A549 (cell line): ENCODE measurements at regions of chr12 and their contacts with region 1.

Region 1: GRCh38 chr12:121579981-121580868 is 598 bp downstream of the KDM2B start:
- DNase-seq: peak; percentile 58 to 67
- ATAC-seq: peak; percentile 78 to 80
- H3K4me3 ChIP-seq: peak overlapping the region; percentile 54
- H3K27ac ChIP-seq: peak overlapping the region; percentile 77 to 94
- H3K4me1 ChIP-seq: peaks cover 49% of the 10 kb centered on the region
- CTCF ChIP-seq: no peak
- EP300 ChIP-seq: no peak
- POLR2A ChIP-seq: peak; percentile 47
- RAD21 ChIP-seq: no peak

Region 2: DNA sequence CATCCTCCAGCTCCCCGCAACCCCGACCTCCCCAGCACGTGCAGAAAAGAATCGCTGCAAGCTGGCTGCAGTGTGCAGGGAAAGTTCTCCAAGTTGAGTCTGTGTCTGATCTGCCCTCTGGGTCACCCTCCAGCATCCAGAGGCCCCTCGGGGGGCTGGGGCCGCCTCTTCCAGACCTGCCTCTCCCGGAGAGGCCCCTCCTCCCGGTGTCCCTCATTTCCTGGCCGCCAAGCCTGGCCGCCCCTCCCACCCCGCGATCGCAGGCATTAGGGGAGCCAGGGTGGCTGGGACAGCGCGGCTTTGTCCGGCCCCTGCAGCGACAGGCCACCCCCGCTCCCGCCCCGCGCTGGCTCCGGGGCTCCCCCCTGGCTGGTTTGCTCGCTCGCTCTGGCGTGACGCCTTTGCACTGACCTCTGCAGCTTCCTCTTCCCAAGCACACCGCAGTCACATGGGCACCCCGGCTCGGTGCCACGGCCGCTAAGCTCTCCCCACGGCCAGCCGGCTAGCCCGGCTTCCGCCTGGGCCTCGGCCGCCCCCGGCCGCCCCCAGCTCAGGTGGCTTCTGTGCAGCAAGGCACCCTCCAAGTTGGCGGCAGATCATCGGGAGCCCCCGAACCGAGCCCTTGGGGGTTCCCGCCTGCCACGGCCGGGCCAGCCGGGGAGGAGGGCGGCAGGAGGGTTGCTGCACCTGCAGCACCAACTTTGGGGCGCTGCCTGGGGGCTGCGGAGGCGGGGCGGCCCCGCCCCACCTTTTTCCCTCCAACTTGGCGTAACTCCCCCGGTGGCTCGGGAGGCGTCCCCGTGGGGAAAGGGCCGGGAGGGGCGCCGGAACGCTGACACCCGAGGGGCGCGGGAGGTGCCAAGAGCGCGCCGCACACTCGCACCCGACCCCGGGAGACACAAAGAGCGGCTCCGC is 43.1 kb before region 1 on chr12:
- CTCF ChIA-PET with region 1: interaction called, 3 read pairs
- POLR2A ChIA-PET with region 1: interaction called, 10 read pairs
- DNase-seq: peak; percentile 76 to 79
- ATAC-seq: peak; percentile 79 to 80
- H3K4me3 ChIP-seq: peak overlapping the region; percentile 66
- H3K27ac ChIP-seq: peak overlapping the region; percentile 82 to 89
- H3K4me1 ChIP-seq: peaks cover 28% of the 10 kb centered on the region
- CTCF ChIP-seq: no peak
- EP300 ChIP-seq: no peak
- POLR2A ChIP-seq: peak; percentile 64; the same call in 1 of the 2 replicates
- RAD21 ChIP-seq: no peak